ENCODE measurements at regions of chr2 and their contacts with region 1.

Region 1: DNA sequence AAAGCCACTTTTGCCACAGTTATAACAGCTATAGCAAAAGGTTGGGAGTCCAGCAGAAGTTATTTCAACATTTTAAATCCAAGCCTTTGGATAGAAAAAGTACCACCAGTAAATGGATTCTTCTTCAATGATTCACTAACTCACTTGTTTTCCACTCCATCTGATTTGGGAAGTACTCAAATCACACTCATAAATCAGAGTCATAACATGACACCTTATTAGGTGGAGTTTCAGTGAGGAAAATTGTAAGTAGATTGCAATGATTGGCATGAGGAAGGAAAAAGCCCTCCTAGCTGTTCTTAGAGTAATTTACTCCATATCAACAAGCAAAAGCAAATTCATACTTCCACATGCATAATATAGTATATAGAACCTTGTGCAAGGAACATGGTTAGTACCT is 132.9 kb downstream of the NR4A2 start:
- DNase-seq: no peak
- H3K4me3 Mint-ChIP-seq: no peak overlapping the region
- H3K27ac Mint-ChIP-seq: no peak overlapping the region
- H3K4me1 Mint-ChIP-seq: peaks cover 16% of the 10 kb centered on the region
- H3K27me3 Mint-ChIP-seq: no peaks in the 10 kb centered on the region
- CTCF ChIP-seq: no peak

Region 2: DNA sequence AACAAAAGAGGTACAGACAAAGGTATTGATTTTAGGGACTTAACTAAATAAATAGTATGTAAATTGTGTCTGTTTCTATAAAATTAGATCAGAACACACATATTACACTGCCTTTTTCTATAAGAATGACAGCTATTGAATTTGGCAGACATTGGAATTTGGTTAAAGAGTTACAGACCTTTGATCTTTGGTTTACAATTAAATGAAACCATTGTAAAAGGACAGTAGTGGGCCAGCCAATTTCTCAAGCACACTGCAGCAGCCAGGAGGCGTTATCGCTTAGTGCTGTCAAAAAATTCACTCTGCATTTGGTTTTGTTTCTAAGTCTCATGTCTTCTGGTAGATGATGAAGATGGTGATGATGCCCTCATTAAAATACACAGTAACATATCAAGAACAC is 43.0 kb before region 1 on chr2:
- CTCF ChIA-PET with region 1: no interaction called
- intact Hi-C with region 1: loop called (anchors 5 kb)
- DNase-seq: peak; percentile 21
- H3K4me3 Mint-ChIP-seq: no peak overlapping the region
- H3K27ac Mint-ChIP-seq: no peak overlapping the region
- H3K4me1 Mint-ChIP-seq: no peaks in the 10 kb centered on the region
- H3K27me3 Mint-ChIP-seq: no peaks in the 10 kb centered on the region
- CTCF ChIP-seq: no peak

Measured in Calu3 (cell line).